ENCODE measurements at regions of chr3 and their contacts with region 1.

Region 1: GRCh38 chr3:20361000-20361399 is 175.0 kb upstream of the SGO1 start:
- DNase-seq: no peak

Region 2: DNA sequence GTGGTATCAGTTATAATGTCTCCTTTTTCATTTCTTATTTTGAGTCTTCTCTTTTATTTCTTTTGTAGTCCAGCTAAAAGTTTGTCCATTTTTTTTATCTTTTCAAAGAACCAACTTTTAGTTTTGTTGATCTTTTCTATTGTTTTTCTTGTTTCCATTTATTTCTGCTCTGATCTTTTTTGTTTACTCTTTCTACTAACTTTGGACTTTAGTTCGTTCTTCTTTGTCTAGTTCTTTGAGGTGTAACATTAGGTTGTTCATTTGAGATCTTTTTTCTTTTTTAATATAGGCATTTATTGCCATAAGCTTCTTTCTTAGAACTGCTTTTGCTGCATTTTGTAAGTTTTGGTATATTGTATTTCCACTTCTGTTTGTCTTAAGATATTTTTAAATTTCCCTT is 269.7 kb before region 1 on chr3:
- intact Hi-C with region 1: no loop called
- DNase-seq: no peak

Region 3: GRCh38 chr3:20222274-20222673 is 138.7 kb before region 1 on chr3:
- intact Hi-C with region 1: no loop called
- DNase-seq: no peak

Region 4: DNA sequence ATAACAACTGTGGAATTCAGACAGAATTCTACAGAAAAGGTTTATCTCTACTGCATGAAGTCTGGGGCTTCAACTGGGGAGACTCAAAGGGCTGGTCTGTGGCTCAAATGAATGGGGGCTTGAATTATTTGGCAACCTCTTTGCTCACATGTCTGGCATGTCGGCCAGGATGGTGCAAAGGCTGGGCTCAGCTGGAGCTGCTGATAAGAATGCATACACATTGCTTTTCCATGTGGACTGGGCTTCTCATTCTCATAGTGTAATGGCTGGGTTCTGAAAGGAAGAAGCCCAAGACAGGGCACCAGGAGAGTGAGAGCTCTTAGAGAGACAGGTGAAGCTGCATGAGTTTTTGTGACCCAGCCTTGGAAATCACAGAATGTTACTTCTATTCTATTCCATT is 19.3 kb after region 1 on chr3:
- intact Hi-C with region 1: loop called in 1 of 2 experiments (anchors 2 kb)
- DNase-seq: no peak

Measured in posterior vena cava (tissue), 2 donors.